HCT116 (cell line): ENCODE measurements at regions of chr1 and their contacts with region 1.

Region 1: GRCh38 chr1:21216835-21217811 is 40.4 kb upstream of the EIF4G3 start:
- DNase-seq: peak; percentile 38
- ATAC-seq: peak; percentile 76
- H3K4me3 ChIP-seq: no peak overlapping the region
- H3K27ac ChIP-seq: no peak overlapping the region
- H3K4me1 ChIP-seq: peaks cover 2 to 7% of the 10 kb centered on the region in 2 experiments; a peak in 2 of 4 replicates
- H3K27me3 ChIP-seq: no peaks in the 10 kb centered on the region
- CTCF ChIP-seq: peak; percentile 50 to 95 (median 87); a peak in 5 of 6 replicates
- POLR2A ChIP-seq: no peak
- RAD21 ChIP-seq: peak; percentile 67

Region 2: DNA sequence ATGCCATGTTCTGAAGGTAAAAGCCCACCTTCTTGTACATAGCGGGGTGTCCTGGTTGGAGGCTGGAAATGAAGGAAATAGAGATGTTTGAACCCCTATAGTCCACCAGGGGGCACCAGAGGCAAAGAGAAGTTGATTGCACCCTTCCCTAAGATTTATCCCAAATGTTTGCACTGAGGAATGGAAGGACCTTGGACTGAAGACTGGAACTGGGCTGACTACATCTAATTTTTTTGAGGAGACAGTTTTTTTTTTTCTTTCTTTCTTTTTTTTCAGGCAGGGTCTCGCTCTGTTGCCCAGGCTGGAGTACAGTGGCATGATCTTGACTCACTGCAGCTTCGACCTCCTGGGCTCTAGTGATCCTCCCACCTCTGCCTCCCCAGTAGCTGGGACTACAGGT is 14.9 kb after region 1 on chr1:
- CTCF ChIA-PET with region 1: interaction called, 12 read pairs
- POLR2A ChIA-PET with region 1: no interaction called
- RAD21 ChIA-PET with region 1: no interaction called
- intact Hi-C with region 1: no loop called
- DNase-seq: peak; percentile 26
- ATAC-seq: peak; percentile 81
- H3K4me3 ChIP-seq: no peak overlapping the region
- H3K27ac ChIP-seq: no peak overlapping the region
- H3K4me1 ChIP-seq: peaks cover 0 to 10% of the 10 kb centered on the region in 2 experiments; a peak in 1 of 4 replicates
- H3K27me3 ChIP-seq: no peaks in the 10 kb centered on the region
- CTCF ChIP-seq: peak; percentile 61 to 83 (median 76)
- POLR2A ChIP-seq: no peak
- RAD21 ChIP-seq: peak; percentile 90

Region 3: GRCh38 chr1:21524686-21525339 is 307.7 kb after region 1 on chr1:
- CTCF ChIA-PET with region 1: no interaction called
- POLR2A ChIA-PET with region 1: no interaction called
- RAD21 ChIA-PET with region 1: no interaction called
- intact Hi-C with region 1: no loop called
- DNase-seq: no peak
- ATAC-seq: no peak
- H3K4me3 ChIP-seq: no peak overlapping the region
- H3K27ac ChIP-seq: no peak overlapping the region
- H3K4me1 ChIP-seq: peaks cover 0 to 10% of the 10 kb centered on the region in 2 experiments; a peak in 2 of 4 replicates
- H3K27me3 ChIP-seq: no peaks in the 10 kb centered on the region
- CTCF ChIP-seq: no peak
- POLR2A ChIP-seq: no peak
- RAD21 ChIP-seq: no peak

Region 4: DNA sequence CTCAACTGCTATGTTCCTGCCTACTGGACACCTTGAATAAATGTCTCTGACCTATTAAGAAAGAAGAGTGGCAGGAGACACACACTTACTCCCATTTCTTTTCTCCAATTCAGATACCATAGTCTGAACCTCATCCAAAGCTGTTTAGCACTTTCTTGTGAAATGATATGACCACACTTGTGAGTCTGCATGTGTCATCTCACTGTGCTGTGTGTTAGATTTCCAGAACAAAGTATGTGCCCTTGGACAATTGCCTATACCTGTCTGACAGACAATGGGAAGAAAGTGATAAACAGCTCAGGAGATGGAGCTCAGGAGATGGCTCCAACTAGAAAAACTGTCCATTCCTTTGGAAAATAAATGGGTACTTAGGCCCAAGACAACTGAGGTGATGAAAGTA is 517.4 kb after region 1 on chr1:
- CTCF ChIA-PET with region 1: no interaction called
- POLR2A ChIA-PET with region 1: no interaction called
- RAD21 ChIA-PET with region 1: no interaction called
- intact Hi-C with region 1: no loop called
- DNase-seq: no peak
- ATAC-seq: no peak
- H3K4me3 ChIP-seq: no peak overlapping the region
- H3K27ac ChIP-seq: no peak overlapping the region
- H3K4me1 ChIP-seq: no peaks in the 10 kb centered on the region
- H3K27me3 ChIP-seq: no peaks in the 10 kb centered on the region
- CTCF ChIP-seq: no peak
- POLR2A ChIP-seq: no peak
- RAD21 ChIP-seq: no peak